Activated T-helper 1 cell treated with anti-CD3 and anti-CD28 coated beads, Interleukin-12 subunit alpha, Interleukin-12 subunit beta, Interleukin-2, Interleukin-4 antibody, amounts not matched to agents 30 ng/mL and 10 ng/mL and 1 ng/mL, durations not matched to agents 14 hours and 24 hours and 36 hours (primary cell): ENCODE measurements at regions of chr7 and their contacts with region 1.

Region 1: DNA sequence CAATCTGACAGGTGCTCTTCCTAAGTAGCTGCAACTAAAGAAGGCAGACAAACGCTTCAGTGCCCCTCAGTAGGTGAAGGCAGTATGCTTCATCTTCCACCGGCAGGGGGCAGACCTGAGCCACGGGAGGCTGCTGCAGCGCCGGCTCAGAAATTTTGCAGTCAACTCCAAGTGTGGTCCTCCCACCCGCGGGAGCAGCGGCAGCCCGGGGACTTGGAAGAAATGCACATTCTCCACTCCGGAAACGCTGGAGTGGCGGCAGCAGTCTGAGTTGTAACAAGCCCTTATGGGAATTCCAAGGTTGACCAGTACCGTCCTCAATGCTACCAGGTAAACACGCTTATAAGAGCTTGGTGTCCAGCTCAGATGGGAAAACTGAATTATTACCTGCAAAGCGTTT is 3.4 kb downstream of the IGFBP3 start:
- DNase-seq: peak; percentile 55
- H3K4me3 Mint-ChIP-seq: no peak overlapping the region
- H3K27ac Mint-ChIP-seq: no peak overlapping the region
- H3K4me1 Mint-ChIP-seq: peaks cover 11% of the 10 kb centered on the region
- H3K27me3 Mint-ChIP-seq: peaks cover 44% of the 10 kb centered on the region

Region 2: GRCh38 chr7:46352004-46352954 is 434.6 kb after region 1 on chr7:
- intact Hi-C with region 1: loop called (anchors 2 kb)
- DNase-seq: no peak
- H3K4me3 Mint-ChIP-seq: no peak overlapping the region
- H3K27ac Mint-ChIP-seq: no peak overlapping the region
- H3K4me1 Mint-ChIP-seq: no peaks in the 10 kb centered on the region
- H3K27me3 Mint-ChIP-seq: no peaks in the 10 kb centered on the region

Region 3: DNA sequence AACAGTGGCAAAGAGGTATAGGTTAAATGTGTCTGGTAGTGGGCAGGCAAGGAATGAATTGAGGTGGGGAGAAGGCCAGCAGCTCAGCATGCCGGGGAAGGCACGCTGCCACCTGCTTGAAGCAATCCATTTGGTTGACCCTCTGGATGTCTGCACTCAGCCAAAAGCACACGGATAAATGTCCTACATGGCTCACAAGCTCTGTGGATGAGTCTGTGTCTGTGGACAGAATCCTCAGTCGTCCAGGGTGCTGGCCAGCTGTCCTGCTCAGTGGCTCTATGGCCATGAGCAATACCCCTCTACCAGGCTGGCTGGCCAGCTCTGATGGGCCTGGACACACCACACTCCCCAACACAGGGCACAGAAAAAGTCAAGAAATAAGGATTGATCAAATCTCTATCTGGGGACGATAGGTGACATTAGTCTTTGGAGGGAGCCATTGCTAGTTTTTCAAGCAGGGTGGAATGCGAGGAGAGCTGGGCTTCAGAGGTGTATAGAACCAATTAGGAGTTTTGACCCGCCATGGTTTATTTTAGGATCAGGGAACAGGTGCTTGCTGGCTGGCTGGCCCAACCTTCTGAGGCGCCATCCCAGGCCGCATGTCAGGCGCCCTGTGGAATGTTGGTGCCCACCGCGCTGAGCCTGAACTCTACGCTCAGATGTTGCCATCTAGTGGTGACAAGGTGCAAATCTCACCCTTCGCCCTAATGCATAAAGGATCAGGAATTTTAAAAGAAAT is 1170.8 kb after region 1 on chr7:
- intact Hi-C with region 1: loop called (anchors 1 kb)
- DNase-seq: no peak
- H3K4me3 Mint-ChIP-seq: no peak overlapping the region
- H3K27ac Mint-ChIP-seq: no peak overlapping the region
- H3K4me1 Mint-ChIP-seq: no peaks in the 10 kb centered on the region
- H3K27me3 Mint-ChIP-seq: no peaks in the 10 kb centered on the region

Region 4: DNA sequence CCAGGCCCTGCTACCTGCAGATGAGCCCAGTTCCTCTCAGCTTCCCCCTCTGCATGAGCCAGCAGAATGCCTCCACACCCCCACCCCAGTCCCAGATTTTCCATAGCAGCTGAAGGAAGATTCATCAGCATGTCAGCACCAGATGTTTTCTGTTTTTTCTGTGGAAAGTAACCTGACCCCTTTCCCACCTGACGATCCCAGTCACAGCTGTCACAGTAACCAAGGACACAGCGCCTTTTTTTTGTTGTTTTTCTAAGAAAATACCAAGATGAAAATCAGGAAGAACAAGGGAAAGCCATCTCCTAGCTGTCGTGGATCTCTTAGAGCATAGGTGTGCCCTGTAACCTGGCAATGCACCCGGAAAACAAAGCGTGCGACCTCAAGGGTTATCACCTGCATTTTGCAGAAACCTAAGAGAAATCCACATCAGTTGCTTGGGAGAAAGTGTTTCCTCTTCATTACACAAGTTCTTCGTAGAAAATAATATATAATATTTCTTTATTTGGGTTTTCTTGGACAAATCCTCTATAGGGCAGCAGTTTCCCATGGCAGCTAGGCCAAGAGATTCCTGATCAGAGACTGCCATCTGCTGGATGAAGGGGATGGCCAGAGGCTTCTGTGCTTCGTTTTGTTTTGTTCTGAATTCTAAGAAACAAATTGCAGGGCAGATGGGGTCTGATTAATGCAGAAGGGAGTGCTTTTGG is 1262.3 kb after region 1 on chr7:
- intact Hi-C with region 1: loop called (anchors 5 kb)
- DNase-seq: no peak
- H3K4me3 Mint-ChIP-seq: no peak overlapping the region
- H3K27ac Mint-ChIP-seq: no peak overlapping the region
- H3K4me1 Mint-ChIP-seq: no peaks in the 10 kb centered on the region
- H3K27me3 Mint-ChIP-seq: no peaks in the 10 kb centered on the region

Region 5: DNA sequence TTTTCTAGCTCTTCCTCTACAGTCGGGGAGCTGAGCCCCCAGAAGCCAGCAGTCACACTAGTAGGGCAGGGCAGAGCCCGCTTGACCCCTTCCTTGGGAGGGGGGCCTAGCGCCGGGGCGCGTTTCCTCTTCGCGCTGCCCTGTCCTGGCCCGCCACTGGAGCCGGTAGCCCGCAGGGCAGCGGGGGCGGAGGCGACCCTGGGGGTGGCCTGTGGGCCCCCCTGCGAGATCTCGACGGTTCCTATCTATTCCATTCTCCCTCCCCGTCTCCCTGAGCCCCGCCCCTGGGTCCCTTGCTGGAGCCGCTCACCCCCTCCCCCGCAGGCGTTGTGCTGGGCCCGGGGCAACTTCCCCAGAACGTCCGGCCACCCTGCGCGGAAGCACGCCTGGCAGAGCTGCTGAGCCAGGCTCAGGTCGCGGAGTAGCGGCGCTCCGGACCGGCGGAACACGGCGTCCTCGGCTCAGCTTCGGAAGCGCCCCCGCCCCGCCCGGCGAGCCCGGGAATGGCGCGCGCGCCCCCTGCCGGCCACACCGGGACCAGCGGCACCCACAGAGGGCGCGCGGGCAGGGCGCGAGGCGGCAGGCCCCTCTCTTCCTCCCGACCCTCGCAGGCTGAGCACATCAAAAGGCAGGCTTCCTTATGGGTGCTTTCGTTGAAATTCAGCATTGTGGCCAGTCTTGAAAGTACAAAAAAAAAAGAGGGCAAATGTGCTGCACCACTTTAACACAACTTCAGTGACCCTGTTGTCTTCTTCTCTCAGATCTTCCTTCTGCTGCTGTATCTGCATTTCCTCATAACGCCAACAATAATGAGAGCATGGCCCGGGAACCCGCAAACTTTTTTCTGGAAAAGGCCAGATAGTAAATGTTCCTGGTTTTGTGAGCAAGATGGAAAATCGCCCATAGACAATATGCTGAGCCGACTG is 1336.7 kb after region 1 on chr7:
- intact Hi-C with region 1: loop called (anchors 2 kb)
- DNase-seq: peak; percentile 37
- H3K4me3 Mint-ChIP-seq: peak overlapping the region; percentile 50
- H3K27ac Mint-ChIP-seq: no peak overlapping the region
- H3K4me1 Mint-ChIP-seq: no peaks in the 10 kb centered on the region
- H3K27me3 Mint-ChIP-seq: peaks cover 15% of the 10 kb centered on the region